ENCODE measurements at regions of chr10 and their contacts with region 1.

Region 1: GRCh38 chr10:110497438-110498086 is at the start of gene DUSP5:
- DNase-seq: peak; percentile 91 to 95
- H3K4me3 ChIP-seq: peak within 1 kb of the TSS; percentile 75
- H3K4me3 Mint-ChIP-seq: peak within 1 kb of the TSS; percentile 91
- H3K27ac Mint-ChIP-seq: peak within 1 kb of the TSS; percentile 68
- H3K4me1 ChIP-seq: peaks cover 49% of the 10 kb centered on the region
- H3K4me1 Mint-ChIP-seq: peaks cover 50% of the 10 kb centered on the region
- H3K27me3 ChIP-seq: no peaks in the 10 kb centered on the region
- H3K27me3 Mint-ChIP-seq: no peaks in the 10 kb centered on the region
- CTCF ChIP-seq: no peak
- total RNA-seq, gene DUSP5: 15.0 and 18.4 TPM in 2 replicates

Region 2: DNA sequence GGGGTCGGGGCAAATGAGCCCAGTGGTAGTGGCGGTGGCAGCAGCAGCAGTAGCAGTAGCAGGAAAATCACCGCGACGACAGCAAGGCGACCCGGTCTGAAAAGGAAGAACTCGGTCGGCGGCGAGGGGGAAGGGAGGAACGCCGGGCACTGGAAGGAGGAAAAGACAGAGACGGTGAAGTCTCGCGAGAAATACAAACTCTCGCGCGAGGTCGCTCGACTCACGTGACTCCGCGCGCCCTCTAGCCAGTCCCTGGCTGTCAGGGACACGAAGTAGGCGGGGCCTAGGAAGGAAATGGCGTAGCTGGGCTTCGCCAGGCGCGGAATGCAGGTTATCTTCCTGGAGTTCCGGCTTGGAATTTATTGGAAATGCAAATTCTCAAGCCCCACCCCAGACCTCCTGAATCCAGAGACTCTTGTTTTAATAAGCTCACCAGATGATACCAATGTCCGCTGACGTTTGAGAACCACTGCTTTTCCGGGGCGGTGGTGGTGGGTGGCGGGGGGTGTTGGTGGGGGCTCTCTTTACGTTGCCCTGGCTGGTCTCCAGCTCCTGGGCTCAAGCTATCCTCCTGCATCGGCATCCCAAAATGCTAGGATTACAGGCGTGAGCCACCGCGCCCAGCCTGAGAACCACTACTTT is 192.7 kb before region 1 on chr10 and contains the start of gene SMNDC1:
- CTCF ChIA-PET with region 1: interaction called, 8 read pairs
- POLR2A ChIA-PET with region 1: interaction called, 8 read pairs
- intact Hi-C with region 1: loop called (anchors 1 kb)
- DNase-seq: peak; percentile 99
- H3K4me3 ChIP-seq: peak within 1 kb of the TSS; percentile 94
- H3K4me3 Mint-ChIP-seq: peak within 1 kb of the TSS; percentile 91
- H3K27ac Mint-ChIP-seq: peak within 1 kb of the TSS; percentile 90
- H3K4me1 ChIP-seq: peaks cover 13% of the 10 kb centered on the region
- H3K4me1 Mint-ChIP-seq: no peaks in the 10 kb centered on the region
- H3K27me3 ChIP-seq: no peaks in the 10 kb centered on the region
- H3K27me3 Mint-ChIP-seq: no peaks in the 10 kb centered on the region
- CTCF ChIP-seq: no peak
- total RNA-seq, gene SMNDC1: 51.6 and 52.4 TPM in 2 replicates

Region 3: DNA sequence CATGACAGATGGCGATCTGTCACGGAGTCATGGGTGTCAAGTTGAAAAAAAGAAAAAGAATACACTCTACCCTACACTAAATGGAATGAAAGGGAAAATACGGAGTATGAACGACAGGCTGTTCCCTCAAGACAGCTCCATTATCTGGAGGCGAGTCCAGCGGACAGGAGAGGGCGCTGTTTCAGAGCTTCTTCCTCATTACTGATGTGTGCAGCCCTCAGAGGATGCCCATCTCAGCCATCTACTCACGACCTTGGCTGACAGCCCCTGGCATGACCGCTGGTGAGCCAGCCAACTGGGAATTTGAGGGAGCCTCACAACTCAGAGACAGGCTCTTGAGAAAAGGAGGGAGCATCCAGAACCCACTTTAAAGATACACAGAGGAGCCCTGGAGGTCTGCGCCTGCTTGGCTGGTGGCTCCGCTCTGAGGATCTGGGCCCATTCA is 143.2 kb before region 1 on chr10:
- CTCF ChIA-PET with region 1: interaction called, 12 read pairs
- POLR2A ChIA-PET with region 1: no interaction called
- intact Hi-C with region 1: loop called (anchors 1 kb)
- DNase-seq: peak; percentile 75
- H3K4me3 ChIP-seq: no peak overlapping the region
- H3K4me3 Mint-ChIP-seq: no peak overlapping the region
- H3K27ac Mint-ChIP-seq: no peak overlapping the region
- H3K4me1 ChIP-seq: peaks cover 31% of the 10 kb centered on the region
- H3K4me1 Mint-ChIP-seq: peaks cover 7% of the 10 kb centered on the region
- H3K27me3 ChIP-seq: no peaks in the 10 kb centered on the region
- H3K27me3 Mint-ChIP-seq: no peaks in the 10 kb centered on the region
- CTCF ChIP-seq: peak; percentile 58 to 72

Region 4: GRCh38 chr10:110414563-110415309 is 82.8 kb before region 1 on chr10:
- CTCF ChIA-PET with region 1: no interaction called
- POLR2A ChIA-PET with region 1: interaction called, 3 read pairs
- intact Hi-C with region 1: loop called (anchors 1 kb)
- DNase-seq: peak in 1 of 2 experiments; percentile 51
- H3K4me3 ChIP-seq: no peak overlapping the region
- H3K4me3 Mint-ChIP-seq: no peak overlapping the region
- H3K27ac Mint-ChIP-seq: peak overlapping the region; percentile 84
- H3K4me1 ChIP-seq: peaks cover 61% of the 10 kb centered on the region
- H3K4me1 Mint-ChIP-seq: peaks cover 46% of the 10 kb centered on the region
- H3K27me3 ChIP-seq: no peaks in the 10 kb centered on the region
- H3K27me3 Mint-ChIP-seq: no peaks in the 10 kb centered on the region
- CTCF ChIP-seq: no peak

Region 5: GRCh38 chr10:110481934-110482333 is 15.6 kb before region 1 on chr10:
- CTCF ChIA-PET with region 1: interaction called, 4 read pairs
- POLR2A ChIA-PET with region 1: interaction called, 13 read pairs
- intact Hi-C with region 1: loop called (anchors 1 kb)
- DNase-seq: no peak
- H3K4me3 ChIP-seq: no peak overlapping the region
- H3K4me3 Mint-ChIP-seq: no peak overlapping the region
- H3K27ac Mint-ChIP-seq: peak overlapping the region; percentile 13
- H3K4me1 ChIP-seq: peaks cover 41% of the 10 kb centered on the region
- H3K4me1 Mint-ChIP-seq: peaks cover 27% of the 10 kb centered on the region
- H3K27me3 ChIP-seq: no peaks in the 10 kb centered on the region
- H3K27me3 Mint-ChIP-seq: no peaks in the 10 kb centered on the region
- CTCF ChIP-seq: no peak

Region 6: DNA sequence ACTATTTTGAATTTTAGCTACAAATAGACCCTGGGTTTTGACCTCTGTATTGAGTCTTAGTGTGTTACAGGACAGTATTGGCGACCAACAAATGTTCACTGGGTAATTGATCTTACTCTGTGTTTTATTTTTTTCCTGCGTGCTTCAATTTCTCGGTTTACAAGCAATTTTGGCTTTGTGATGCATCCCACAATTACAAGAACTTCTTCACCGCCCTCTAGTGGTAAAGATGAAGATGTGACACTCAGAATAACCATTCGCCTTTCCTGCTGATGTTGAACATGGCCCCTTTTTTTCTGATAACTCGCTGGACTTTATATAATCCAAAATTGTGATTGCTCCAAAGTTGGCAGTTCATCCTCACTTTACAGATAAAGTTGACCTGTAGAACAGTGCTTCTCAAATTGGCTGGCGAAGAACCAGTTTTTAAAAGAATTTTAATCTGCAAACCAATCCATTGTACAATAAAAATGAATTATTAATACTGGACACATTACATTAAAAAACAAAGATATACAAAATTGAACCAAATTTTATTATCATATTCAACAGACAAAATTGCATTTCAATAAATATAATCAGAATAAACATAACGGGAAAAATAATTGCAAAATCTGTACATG is 49.7 kb after region 1 on chr10:
- CTCF ChIA-PET with region 1: interaction called, 5 read pairs
- POLR2A ChIA-PET with region 1: no interaction called
- intact Hi-C with region 1: loop called (anchors 2 kb)
- DNase-seq: peak in 1 of 2 experiments; percentile 45
- H3K4me3 ChIP-seq: no peak overlapping the region
- H3K4me3 Mint-ChIP-seq: no peak overlapping the region
- H3K27ac Mint-ChIP-seq: no peak overlapping the region
- H3K4me1 ChIP-seq: no peaks in the 10 kb centered on the region
- H3K4me1 Mint-ChIP-seq: peaks cover 11% of the 10 kb centered on the region
- H3K27me3 ChIP-seq: no peaks in the 10 kb centered on the region
- H3K27me3 Mint-ChIP-seq: no peaks in the 10 kb centered on the region
- CTCF ChIP-seq: peak; percentile 85 to 89

Measured in Caco-2 (cell line).